GM12878 (cell line): ENCODE measurements at regions of chr12 and their contacts with region 1.

Region 1: DNA sequence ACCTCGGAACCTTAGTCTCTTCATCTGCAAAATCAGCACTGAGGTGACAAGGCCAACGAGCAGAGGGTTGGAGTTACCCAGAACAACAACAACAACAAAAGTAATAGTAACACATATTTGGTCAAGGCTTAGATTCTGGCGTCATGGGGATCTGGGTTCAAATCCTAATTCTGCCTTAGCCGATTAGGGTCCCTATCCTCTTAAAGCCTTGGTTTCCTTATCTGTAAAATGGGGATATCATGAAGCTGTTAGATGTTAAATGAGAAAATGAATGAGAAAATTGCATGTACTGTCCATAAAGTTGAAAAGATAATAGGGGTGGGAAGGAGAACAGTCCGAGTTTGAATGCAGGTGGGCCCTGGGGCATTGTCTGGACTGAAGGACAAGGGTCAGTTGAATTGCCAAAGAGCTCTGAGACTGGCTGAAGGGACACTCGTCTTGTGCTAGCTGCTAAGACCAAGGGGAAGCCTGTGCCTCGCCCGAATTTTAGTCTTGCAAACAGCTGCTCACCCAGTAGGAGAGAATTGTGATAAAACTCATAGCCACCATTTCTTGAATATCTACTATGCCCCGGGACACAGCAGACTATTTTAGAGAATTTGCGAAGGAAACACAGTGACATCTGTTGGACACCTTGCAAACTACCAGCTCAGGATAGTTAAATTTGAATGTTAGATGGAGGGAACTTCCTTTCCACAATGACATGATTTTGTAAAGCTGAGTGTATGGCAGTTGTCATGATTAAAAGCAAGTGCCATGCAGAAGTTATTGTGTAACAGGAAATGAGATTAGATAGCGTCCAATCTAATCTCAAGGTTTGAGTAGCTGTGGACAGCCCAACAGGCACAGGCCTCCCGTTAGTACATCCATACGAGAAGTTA is 6.8 kb upstream of the HNF1A start:
- DNase-seq: peak; percentile 57
- ATAC-seq: peak; percentile 95
- H3K4me3 ChIP-seq: no peak overlapping the region
- H3K27ac ChIP-seq: no peak overlapping the region
- H3K4me1 ChIP-seq: no peaks in the 10 kb centered on the region
- H3K27me3 ChIP-seq: no peaks in the 10 kb centered on the region
- CTCF ChIP-seq: peak; percentile 72 to 83 (median 79)
- EP300 ChIP-seq: no peak
- POLR2A ChIP-seq: no peak
- RAD21 ChIP-seq: peak; percentile 95

Region 2: GRCh38 chr12:120625557-120626419 is 345.8 kb before region 1 on chr12:
- CTCF ChIA-PET with region 1: interaction called, 3 read pairs
- POLR2A ChIA-PET with region 1: no interaction called
- RAD21 ChIA-PET with region 1: no interaction called
- SMC1A ChIA-PET with region 1: interaction called, 4 read pairs
- in situ Hi-C with region 1: no loop called
- intact Hi-C with region 1: loop called (anchors 5 kb)
- DNase-seq: peak; percentile 11
- ATAC-seq: peak; percentile 90
- H3K4me3 ChIP-seq: no peak overlapping the region; the same call in 1 of the 2 replicates
- H3K27ac ChIP-seq: no peak overlapping the region
- H3K4me1 ChIP-seq: no peaks in the 10 kb centered on the region
- H3K27me3 ChIP-seq: no peaks in the 10 kb centered on the region; a peak in 2 of 4 replicates
- CTCF ChIP-seq: peak in 2 of 3 experiments; percentile 30 to 40; a peak in 3 of 6 replicates
- EP300 ChIP-seq: no peak
- POLR2A ChIP-seq: no peak
- RAD21 ChIP-seq: 0 out of 2 replicates have a peak, but pooled peaks have one; percentile 5

Region 3: DNA sequence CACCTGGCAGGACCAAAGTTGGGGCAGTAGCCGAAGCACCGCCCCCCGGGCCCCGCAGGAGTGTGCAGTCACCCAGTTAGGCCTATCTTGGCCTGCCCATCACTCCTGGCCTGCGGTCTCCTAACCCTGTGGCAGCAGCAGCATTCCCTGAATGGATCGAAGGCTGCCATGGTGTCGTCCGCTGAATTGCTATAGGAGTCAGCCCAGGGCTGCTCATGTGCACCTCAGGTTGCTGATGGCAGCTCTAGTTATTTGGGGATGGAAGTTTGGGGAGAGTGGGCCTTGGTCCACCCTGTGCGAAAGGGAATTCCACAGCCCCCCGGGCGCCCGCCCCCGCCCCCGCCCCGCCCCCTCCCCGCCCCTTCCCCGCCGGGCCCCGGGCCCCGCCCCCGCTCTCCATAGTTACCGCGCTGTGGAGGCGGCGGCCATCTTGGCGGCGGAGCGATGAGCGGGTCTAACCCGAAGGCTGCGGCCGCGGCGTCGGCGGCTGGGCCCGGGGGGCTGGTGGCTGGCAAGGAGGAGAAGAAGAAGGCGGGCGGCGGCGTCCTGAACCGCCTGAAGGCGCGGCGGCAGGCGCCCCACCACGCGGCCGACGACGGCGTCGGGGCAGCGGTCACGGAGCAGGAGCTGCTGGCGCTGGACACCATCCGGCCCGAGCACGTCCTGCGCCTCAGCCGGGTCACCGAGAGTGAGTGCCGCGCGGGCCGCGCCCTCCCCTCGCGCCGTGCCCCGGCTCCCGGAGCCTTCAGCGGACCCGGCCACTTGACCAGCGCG is 261.3 kb before region 1 on chr12 and contains the start of gene UNC119B:
- CTCF ChIA-PET with region 1: interaction called, 7 read pairs
- POLR2A ChIA-PET with region 1: interaction called, 3 read pairs
- RAD21 ChIA-PET with region 1: interaction called, 13 read pairs
- SMC1A ChIA-PET with region 1: interaction called, 9 read pairs
- in situ Hi-C with region 1: no loop called
- intact Hi-C with region 1: loop called (anchors 5 kb)
- DNase-seq: no peak
- ATAC-seq: peak; percentile 88
- H3K4me3 ChIP-seq: peak within 1 kb of the TSS; percentile 68
- H3K27ac ChIP-seq: peak within 1 kb of the TSS; percentile 62
- H3K4me1 ChIP-seq: peaks cover 15% of the 10 kb centered on the region
- H3K27me3 ChIP-seq: no peaks in the 10 kb centered on the region
- CTCF ChIP-seq: no peak
- EP300 ChIP-seq: no peak
- POLR2A ChIP-seq: peak; percentile 79
- RAD21 ChIP-seq: no peak
- polyA plus RNA-seq, gene UNC119B: 4.3 to 8.5 TPM

Region 4: DNA sequence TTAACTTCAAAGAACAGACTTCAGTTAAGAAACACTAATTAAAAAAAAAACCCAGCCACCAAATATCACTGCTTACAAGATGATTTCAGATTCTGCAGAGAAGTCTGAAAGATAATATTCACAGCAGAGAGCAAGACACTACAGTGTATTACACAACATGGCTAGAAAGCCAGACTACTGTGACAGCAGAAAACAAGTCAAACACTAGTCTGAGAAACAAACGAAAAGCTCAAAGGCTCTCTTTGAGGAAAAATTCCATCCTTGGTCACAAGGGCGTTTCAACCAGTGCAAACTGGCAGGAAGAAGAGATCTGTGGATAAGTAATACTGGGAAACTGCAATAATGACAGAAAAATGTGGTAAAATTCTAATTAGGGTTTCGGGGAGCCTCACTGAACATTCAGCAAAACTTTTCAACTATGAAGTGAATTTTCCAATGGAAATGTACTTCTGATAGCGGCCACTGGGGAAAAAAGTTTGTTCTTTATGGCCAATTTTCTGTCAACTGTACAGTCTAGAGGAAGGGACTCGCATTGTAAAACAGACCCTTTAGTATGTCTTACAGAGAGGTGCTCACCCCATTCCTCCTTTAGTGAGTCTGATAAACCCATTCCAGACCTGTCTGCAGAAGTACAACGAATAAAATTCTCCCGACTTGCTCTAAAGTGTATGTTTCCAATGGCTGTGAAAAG is 195.5 kb before region 1 on chr12:
- CTCF ChIA-PET with region 1: interaction called, 10 read pairs
- POLR2A ChIA-PET with region 1: interaction called, 4 read pairs
- RAD21 ChIA-PET with region 1: interaction called, 5 read pairs
- SMC1A ChIA-PET with region 1: interaction called, 5 read pairs
- in situ Hi-C with region 1: no loop called
- intact Hi-C with region 1: no loop called
- DNase-seq: no peak
- ATAC-seq: no peak
- H3K4me3 ChIP-seq: no peak overlapping the region
- H3K27ac ChIP-seq: no peak overlapping the region
- H3K4me1 ChIP-seq: no peaks in the 10 kb centered on the region
- H3K27me3 ChIP-seq: no peaks in the 10 kb centered on the region
- CTCF ChIP-seq: 0 out of 6 replicates have a peak, but pooled peaks of 1 of the 3 experiments have one; percentile 7
- EP300 ChIP-seq: no peak
- POLR2A ChIP-seq: no peak
- RAD21 ChIP-seq: no peak

Region 5: DNA sequence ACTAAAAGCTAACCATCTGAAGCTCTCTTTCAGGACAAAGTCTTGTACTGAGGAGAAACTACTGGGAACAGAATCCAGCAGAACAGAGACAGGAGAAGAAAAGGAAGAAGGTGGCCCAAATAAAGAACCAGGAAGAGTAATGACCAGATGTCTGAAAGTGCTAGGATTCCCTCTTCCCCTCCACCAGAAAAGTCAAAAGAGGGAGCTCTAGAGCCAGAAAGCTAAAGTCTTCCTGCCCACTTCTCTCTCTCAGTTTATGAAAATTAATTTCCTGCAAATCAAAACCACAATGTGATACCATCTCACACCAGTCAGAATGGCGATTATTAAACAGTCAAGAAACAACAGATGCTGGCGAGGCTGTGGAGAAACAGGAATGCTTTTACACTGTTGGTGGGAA is 114.6 kb before region 1 on chr12:
- CTCF ChIA-PET with region 1: interaction called, 35 read pairs
- POLR2A ChIA-PET with region 1: interaction called, 7 read pairs
- RAD21 ChIA-PET with region 1: interaction called, 21 read pairs
- SMC1A ChIA-PET with region 1: interaction called, 28 read pairs
- in situ Hi-C with region 1: no loop called
- intact Hi-C with region 1: loop called (anchors 1 kb)
- DNase-seq: no peak
- ATAC-seq: no peak; the same call in 2 of the 3 replicates
- H3K4me3 ChIP-seq: no peak overlapping the region
- H3K27ac ChIP-seq: peak overlapping the region; percentile 27; the same call in 1 of the 2 replicates
- H3K4me1 ChIP-seq: peaks cover 32% of the 10 kb centered on the region
- H3K27me3 ChIP-seq: no peaks in the 10 kb centered on the region
- CTCF ChIP-seq: peak; percentile 30 to 52 (median 34); a peak in 4 of 6 replicates
- EP300 ChIP-seq: no peak
- POLR2A ChIP-seq: no peak
- RAD21 ChIP-seq: peak; percentile 63

Region 6: GRCh38 chr12:120939523-120939922 is 32.0 kb before region 1 on chr12:
- CTCF ChIA-PET with region 1: interaction called, 18 read pairs
- POLR2A ChIA-PET with region 1: interaction called, 3 read pairs
- RAD21 ChIA-PET with region 1: interaction called, 14 read pairs
- SMC1A ChIA-PET with region 1: interaction called, 15 read pairs
- in situ Hi-C with region 1: no loop called
- intact Hi-C with region 1: no loop called
- DNase-seq: no peak
- ATAC-seq: no peak
- H3K4me3 ChIP-seq: no peak overlapping the region
- H3K27ac ChIP-seq: no peak overlapping the region
- H3K4me1 ChIP-seq: no peaks in the 10 kb centered on the region; the same call in 1 of the 2 replicates
- H3K27me3 ChIP-seq: no peaks in the 10 kb centered on the region; a peak in 1 of 4 replicates
- CTCF ChIP-seq: no peak
- EP300 ChIP-seq: no peak
- POLR2A ChIP-seq: no peak
- RAD21 ChIP-seq: no peak